ENCODE measurements at regions of chr22 and their contacts with region 1.

Region 1: GRCh38 chr22:29040385-29041275 is 21.0 kb downstream of the C22orf31 start:
- DNase-seq: no peak
- ATAC-seq: peak; percentile 87

Region 2: GRCh38 chr22:28855355-28856094 is 185.1 kb before region 1 on chr22:
- intact Hi-C with region 1: loop called (anchors 2 kb)
- DNase-seq: no peak
- ATAC-seq: peak; percentile 80

Measured in Right ventricle myocardium superior (tissue), 1 donor.